Activated CD4-positive, alpha-beta memory T cell treated with anti-CD3 and anti-CD28 coated beads for 36 hours (primary cell): ENCODE measurements at regions of chr7 and their contacts with region 1.

Region 1: DNA sequence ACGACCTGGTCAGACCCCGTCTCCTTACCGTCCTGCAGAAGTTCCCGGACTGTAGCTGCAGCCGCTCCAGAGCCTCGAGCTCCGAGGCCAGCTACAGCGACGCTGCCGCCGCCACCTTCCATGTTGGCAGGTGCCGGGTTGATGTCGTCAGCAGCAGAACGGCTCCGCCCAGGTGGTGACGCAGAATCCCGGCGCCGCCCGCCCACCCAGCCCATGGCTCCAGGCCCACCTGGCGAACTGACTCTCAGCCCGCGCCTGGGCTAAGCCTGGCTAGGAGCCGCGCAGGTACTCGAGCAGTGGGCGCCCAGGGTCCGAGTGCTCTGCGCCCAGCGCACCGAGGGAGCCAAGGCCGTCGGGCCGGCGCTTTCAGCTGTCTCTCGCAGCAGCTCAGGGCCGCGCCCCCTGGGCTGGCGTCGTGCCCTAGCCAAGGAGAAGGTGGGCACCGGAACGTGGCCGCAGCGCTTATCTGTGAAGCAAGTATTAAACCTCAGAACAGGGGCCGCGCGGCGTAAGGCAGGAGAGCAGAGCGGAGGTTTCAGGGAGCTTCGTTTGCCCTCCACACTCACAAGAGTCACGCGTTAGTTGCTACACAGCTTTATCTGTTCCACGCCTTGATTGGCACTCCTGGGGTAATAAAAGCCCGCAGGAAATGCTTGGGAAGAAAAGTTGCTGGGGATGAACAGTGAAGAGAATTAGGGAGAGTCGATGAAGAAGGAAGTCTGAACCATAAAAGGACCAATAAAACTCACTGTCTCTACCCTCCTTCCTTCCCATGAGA is at the starts of genes COG5 and DUS4L:
- DNase-seq: peak; percentile 92
- H3K4me3 Mint-ChIP-seq: peak within 1 kb of the TSS; percentile 92
- H3K27ac Mint-ChIP-seq: peak within 1 kb of the TSS; percentile 90
- H3K4me1 Mint-ChIP-seq: peaks cover 57% of the 10 kb centered on the region
- H3K27me3 Mint-ChIP-seq: no peaks in the 10 kb centered on the region
- total RNA-seq, gene COG5: 38.9 to 40.7 TPM
- total RNA-seq, gene DUS4L: 11.8 to 12.4 TPM

Region 2: DNA sequence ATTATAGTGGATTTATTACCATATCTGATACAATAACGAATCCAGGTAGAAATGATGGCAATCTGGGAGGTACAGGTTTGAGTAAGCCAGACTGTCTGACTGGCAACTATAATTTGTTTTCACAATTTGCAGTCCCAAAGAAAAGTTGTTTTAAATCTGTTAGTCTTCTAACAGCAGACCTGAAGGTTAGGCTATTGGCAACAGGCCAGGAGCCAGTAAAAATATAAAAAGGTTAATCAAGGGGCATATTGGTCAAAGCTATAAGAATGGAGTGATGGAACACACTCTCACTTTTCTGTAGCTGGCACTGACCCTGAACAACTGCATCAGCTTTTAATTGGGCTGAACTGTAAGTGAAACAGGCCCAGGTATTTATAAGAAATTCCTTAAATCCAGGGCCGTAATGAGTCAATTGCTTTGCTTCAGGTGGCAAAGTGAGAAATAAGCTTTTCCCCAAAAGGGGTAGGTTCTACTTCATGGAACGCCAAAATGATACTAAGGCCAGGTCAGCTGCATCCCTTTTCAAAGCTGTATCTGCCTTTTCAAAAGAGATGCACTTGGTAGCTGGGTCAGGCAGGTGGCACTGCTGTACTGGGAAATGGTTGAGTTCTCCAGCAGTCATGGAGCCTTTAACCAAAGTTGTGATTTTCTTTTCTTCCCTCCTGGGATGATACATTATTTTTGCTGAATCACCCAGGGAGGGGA is 101.1 kb before region 1 on chr7:
- CTCF ChIA-PET with region 1: interaction called, 3 read pairs
- POLR2A ChIA-PET with region 1: no interaction called
- intact Hi-C with region 1: loop called (anchors 2 kb)
- DNase-seq: peak; percentile 61
- H3K4me3 Mint-ChIP-seq: no peak overlapping the region
- H3K27ac Mint-ChIP-seq: no peak overlapping the region
- H3K4me1 Mint-ChIP-seq: no peaks in the 10 kb centered on the region
- H3K27me3 Mint-ChIP-seq: no peaks in the 10 kb centered on the region

Region 3: GRCh38 chr7:107661081-107661864 is 97.3 kb after region 1 on chr7:
- CTCF ChIA-PET with region 1: interaction called, 8 read pairs
- POLR2A ChIA-PET with region 1: interaction called, 3 read pairs
- intact Hi-C with region 1: loop called (anchors 1 kb)
- DNase-seq: peak; percentile 70
- H3K4me3 Mint-ChIP-seq: peak overlapping the region; percentile 84
- H3K27ac Mint-ChIP-seq: peak overlapping the region; percentile 93
- H3K4me1 Mint-ChIP-seq: peaks cover 30% of the 10 kb centered on the region
- H3K27me3 Mint-ChIP-seq: peaks cover 11% of the 10 kb centered on the region

Region 4: DNA sequence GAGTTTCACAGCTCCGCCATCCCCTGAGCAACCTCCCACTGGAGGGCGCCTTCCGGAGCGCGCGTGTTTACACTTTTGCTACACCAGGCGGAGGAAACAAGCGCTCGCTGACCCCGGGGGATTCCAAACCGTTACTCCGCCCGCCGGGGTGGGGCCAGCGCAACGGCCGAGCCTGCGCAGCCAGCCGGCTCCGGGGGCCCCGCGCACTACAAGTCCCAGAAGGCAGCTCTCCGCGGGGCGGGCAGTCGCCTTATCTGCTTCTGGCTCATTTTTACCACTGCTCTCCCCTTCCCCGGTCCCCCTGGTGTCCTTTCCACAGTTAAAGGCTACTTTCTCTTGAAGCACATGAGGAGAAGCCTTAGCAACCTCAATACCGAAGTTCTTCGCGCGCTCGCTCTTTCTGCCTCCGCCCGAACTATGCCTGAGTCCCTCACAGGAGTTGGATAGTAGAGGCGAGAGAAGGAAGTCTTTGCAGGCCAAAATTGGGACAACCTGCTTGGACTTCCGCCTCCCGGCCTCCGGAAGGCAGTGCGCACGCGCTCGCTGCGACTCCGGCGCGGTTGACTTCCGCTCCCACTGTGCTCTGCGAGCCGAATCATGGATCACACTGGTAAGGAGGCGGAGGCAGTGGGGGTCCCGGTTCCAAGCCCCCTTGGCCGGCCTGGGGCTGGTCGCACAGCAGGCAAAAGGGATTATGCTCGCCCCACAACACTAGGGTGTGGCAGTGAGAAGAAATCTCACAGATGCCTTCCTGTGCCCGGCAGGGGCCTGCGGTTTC is 179.8 kb after region 1 on chr7 and contains the start of gene CBLL1:
- CTCF ChIA-PET with region 1: interaction called, 11 read pairs
- POLR2A ChIA-PET with region 1: interaction called, 14 read pairs
- intact Hi-C with region 1: loop called (anchors 1 kb)
- DNase-seq: peak; percentile 99
- H3K4me3 Mint-ChIP-seq: peak within 1 kb of the TSS; percentile 97
- H3K27ac Mint-ChIP-seq: peak within 1 kb of the TSS; percentile 100
- H3K4me1 Mint-ChIP-seq: peaks cover 49% of the 10 kb centered on the region
- H3K27me3 Mint-ChIP-seq: no peaks in the 10 kb centered on the region
- total RNA-seq, gene CBLL1: 38.7 to 40.4 TPM

Region 5: DNA sequence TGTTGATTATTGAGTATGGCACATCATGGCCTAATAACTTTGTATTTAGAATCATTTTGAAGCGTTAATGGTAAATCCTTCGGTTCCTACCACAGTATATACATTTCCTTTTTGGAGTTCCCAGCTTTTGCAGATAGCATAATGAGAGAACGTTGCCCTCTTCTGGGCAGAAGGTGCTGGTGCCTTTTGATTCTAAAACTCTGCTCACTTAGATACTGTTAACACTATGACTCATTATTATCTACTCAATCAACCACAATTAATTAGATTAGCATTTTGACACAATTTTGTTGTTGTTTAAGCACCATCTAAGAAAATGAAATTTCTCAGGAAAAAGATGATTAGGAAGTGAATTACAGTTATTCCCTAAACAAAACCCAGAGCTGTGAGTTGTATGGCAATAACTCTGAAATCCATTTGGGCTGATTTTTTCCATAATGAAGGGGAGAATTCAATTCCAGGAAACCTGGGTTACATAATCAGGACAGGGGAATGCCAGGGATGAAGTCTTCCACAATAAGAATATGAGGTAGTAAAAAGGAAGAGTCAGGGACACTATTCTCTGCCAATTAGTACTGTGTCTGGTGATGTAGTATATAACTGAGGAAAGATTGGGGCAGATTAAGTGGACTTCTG is 315.6 kb after region 1 on chr7:
- CTCF ChIA-PET with region 1: interaction called, 5 read pairs
- POLR2A ChIA-PET with region 1: no interaction called
- intact Hi-C with region 1: loop called (anchors 5 kb)
- DNase-seq: peak; percentile 47
- H3K4me3 Mint-ChIP-seq: no peak overlapping the region
- H3K27ac Mint-ChIP-seq: peak overlapping the region; percentile 24
- H3K4me1 Mint-ChIP-seq: peaks cover 20% of the 10 kb centered on the region
- H3K27me3 Mint-ChIP-seq: no peaks in the 10 kb centered on the region

Region 6: DNA sequence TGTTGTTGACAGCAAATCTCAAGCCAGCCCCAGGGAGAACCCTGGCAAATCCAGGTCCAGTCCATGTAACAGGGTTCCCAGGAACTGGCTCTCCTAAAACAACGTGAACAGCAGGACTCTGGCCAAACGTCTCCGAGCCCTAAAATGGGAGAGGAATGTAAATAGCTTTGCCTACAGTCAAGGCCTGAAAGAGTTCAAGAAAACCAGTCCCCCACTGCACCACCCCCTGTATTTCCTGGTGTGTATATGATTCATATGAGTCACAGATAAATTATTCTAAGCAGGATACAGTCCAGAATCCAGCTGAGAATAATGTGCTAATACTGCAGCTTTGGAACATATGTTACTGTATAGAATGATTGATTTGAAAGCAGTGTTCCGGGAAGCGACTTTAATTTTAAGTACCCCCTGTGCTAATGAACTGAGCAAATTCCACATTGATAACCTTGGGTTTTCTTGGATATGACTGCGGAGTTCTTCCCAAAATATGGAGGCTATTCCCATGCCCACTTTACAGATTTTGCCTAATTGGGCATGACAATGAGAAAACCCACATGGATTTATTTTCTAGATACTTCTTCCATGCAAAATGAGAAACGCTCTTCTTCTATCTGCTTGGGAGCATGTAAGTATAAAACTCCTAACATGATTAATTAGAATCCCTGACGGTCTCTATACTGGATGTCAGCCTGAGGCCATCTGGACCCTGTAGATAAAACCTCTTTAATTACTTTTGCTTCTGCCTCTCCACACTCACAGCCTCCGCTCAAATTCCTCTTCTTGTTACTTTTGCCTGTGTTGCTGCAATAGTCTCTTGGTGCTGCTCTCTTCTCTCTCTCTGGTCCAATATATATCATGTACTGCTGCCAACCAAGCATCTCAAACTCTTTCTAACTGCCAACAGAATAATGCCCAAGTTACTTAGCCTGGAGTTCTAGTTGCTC is 516.0 kb after region 1 on chr7:
- CTCF ChIA-PET with region 1: no interaction called
- POLR2A ChIA-PET with region 1: no interaction called
- intact Hi-C with region 1: no loop called
- DNase-seq: no peak
- H3K4me3 Mint-ChIP-seq: no peak overlapping the region
- H3K27ac Mint-ChIP-seq: no peak overlapping the region
- H3K4me1 Mint-ChIP-seq: no peaks in the 10 kb centered on the region
- H3K27me3 Mint-ChIP-seq: no peaks in the 10 kb centered on the region